Psoas muscle (tissue), 8 donors: ENCODE measurements at regions of chr4 and their contacts with region 1.

Region 1: GRCh38 chr4:113339430-113339813 is 290.0 kb downstream of the ANK2 start:
- DNase-seq: no peak
- ATAC-seq: no peak
- H3K4me3 ChIP-seq: no peak overlapping the region
- H3K27ac ChIP-seq: no peak overlapping the region
- H3K4me1 ChIP-seq: no peaks in the 10 kb centered on the region
- H3K27me3 ChIP-seq: no peaks in the 10 kb centered on the region
- CTCF ChIP-seq: no peak

Region 2: GRCh38 chr4:112253382-112254000 is 1085.9 kb before region 1 on chr4:
- intact Hi-C with region 1: loop called in 1 of 2 experiments (anchors 5 kb)
- DNase-seq: no peak
- ATAC-seq: no peak
- H3K4me3 ChIP-seq: no peak overlapping the region
- H3K27ac ChIP-seq: no peak overlapping the region
- H3K4me1 ChIP-seq: no peaks in the 10 kb centered on the region
- H3K27me3 ChIP-seq: no peaks in the 10 kb centered on the region
- CTCF ChIP-seq: no peak

Region 3: GRCh38 chr4:112853662-112854256 is 485.7 kb before region 1 on chr4:
- intact Hi-C with region 1: no loop called
- DNase-seq: no peak
- ATAC-seq: no peak
- H3K4me3 ChIP-seq: no peak overlapping the region
- H3K27ac ChIP-seq: no peak overlapping the region
- H3K4me1 ChIP-seq: peaks cover 17% of the 10 kb centered on the region
- H3K27me3 ChIP-seq: no peaks in the 10 kb centered on the region
- CTCF ChIP-seq: peak; percentile 23